Posterior cingulate gyrus (tissue), 11 donors: ENCODE measurements at regions of chr7 and their contacts with region 1.

Region 1: DNA sequence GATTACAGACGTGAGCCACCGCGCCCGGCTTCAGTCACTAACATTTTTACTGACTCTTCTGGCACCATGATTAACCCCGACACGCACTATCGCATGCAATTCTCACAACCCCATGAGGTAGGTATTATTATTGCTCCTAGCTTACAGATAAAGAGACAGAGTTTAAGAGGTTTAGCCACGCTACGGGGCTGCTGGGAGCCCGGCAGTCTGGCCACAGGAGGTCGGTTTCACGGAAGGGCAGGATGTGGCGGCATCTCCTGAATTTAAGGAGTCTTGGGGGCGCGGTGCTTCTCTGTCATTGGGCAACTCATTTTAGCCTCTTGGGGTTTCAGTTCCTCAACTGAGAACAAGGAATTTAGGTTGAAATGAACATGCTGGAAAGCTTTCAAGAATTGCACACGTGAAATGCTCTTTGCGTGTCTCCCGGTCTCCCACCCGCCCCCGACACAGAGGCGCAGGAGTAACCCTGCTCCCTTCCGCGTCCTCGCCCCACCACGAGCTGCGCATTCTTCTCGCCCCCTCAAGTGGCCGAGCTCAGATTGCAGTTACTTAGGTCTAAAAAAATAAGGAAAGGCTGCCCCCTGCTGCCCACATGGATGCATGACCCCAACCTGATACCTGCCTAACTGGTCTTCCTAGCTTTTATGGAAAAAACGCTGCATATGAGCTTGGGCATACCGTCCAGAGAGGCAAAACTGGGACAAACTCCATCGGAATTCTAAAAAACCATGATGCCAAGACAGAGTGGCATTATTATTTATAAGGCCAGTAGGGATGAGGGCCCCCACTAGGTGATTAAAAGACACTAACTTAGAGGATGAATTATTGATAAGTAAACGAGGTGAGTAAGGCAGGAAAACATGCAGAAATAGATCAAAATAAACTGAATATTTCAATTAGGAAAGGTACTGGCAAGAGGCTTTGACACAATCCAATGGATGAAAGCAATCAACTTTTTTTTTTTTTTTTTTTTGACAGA is 12.4 kb downstream of the PRSS2 start:
- DNase-seq: peak; percentile 77 to 97 (median 86)

Region 2: DNA sequence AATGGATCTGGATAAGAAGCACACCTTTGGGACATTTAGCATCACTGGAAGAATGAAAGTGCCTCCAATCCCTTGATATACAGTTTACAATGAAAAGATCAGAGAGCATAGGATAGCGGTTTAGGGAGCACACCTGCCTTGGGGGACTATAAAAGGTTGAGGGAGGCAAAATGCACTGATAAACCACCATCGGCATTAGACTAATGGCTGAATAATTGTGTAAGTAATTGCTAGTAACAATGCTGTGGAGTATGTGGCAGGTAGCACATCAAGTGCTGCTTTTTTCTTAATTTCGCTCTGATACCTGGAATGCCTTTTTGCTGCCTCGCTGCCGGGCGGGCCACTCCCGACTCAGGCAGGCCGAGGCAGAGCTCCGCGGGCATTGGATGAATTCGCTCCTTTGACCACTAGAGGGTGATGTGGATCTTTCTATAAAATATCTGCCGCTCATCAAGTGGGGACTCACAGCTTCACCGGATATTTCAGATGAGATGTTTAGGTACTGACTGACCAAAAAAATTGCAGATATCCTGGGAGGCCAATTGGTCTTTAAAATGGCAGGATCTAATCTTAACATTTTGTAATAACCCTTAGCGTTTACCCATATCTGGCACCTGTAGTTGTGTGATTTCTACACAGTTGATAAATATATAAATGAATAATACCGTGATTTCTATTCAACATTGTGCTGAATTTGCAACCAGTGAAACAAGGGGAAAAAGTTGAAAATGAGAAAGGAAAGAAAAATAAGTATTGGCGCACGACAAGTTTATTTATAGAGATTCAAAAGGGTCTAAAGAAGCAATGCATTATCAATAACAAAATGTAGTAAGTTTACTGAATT is 150.7 kb before region 1 on chr7:
- intact Hi-C with region 1: loop called (anchors 1 kb)
- DNase-seq: peak; percentile 22 to 93 (median 56)

Region 3: DNA sequence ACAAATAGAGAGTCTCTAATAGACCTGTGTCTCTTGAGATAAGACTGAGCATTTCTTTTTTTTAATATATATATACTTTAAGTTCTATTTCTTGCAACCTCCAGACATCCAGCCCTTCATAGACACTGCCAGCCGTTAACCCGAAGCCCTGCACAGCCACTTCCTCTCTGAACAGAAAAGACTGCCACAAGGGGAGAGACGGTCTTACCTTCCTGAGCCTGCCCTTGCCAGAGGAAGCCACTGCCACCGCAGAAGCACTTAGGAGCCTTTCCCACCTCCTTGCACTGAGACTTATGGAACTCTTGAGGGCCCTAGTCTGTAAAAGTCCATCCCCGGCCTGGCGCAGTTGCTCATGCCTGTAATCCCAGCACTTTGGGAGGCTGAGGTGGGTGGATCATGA is 65.8 kb before region 1 on chr7:
- intact Hi-C with region 1: loop called (anchors 5 kb)
- DNase-seq: no peak